ENCODE measurements at regions of chr19 and their contacts with region 1.

Region 1: DNA sequence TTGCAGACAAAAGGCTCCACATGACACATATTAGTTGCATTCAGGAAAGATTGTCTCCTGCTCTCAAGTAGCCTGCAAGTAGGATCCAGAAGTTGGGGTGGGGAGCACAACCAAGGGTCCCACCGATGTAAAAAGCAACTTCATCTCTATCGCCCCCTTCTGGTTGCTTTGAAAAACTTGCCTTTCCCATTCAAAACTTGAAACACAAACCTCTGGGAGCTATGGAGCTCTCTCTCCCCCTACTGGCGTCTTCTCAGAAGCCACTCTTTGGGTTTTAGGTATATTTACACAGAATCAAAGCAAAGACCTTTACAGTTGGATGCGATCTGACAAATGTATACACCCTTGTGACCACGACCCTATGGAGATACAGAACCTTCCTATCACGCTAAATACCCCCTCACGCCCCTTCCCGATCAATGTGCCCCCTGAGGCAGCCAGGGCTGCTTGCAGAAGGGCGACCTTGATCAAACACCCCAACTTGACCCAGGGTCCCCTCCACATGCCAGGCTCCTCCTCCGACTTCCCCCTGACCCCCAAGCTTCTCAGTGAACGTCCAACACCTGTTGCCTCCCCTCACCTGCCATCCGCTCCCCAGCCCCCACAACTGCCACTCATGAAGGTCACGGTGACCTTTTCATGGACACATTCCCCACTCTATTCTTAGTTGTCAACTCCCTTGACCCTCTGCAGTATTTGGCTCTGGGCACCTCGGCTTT is 10.1 kb downstream of the NOSIP start:
- DNase-seq: peak; percentile 87
- CTCF ChIP-seq: peak; percentile 92

Region 2: DNA sequence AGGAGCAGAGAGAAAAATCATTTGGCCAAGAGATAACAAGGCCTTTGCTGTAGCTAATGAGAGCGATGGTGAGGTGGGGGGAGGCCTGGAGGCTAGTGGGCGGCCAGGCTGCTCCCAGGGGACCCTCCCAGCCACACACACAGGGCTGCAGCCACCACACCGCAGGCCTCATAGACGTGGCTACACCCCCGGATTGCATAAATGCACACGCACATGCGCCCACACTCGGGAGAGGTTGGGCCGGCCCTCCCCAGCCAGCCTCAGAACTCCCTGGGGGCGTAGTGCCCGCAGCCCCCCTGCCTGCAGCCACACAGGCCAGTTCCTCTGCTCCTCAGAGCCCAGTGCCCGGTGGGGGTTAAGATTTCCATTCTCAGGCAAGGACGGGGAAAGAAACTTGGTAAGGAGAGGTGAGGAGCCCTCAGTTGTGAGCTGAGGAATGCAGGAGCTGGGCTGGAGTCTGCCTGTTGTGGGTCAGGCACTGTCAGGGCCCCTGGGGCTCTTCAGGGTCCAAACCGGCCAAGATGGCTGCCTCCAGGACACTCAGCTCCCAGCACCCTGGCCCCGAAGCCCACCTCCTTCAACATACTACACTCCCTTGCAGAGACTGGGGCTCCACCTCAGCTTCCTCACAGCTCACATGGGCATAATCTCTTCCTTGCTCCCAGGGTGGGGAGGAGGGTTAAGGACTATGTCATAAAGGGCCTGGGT is 155.0 kb before region 1 on chr19:
- CTCF ChIA-PET with region 1: no interaction called
- POLR2A ChIA-PET with region 1: no interaction called
- DNase-seq: peak; percentile 79
- CTCF ChIP-seq: no peak

Region 3: GRCh38 chr19:49473868-49474544 is 96.3 kb before region 1 on chr19 and contains the start of gene FLT3LG:
- CTCF ChIA-PET with region 1: interaction called, 11 read pairs
- POLR2A ChIA-PET with region 1: no interaction called
- DNase-seq: peak; percentile 92
- CTCF ChIP-seq: peak; percentile 94

Region 4: GRCh38 chr19:49502866-49503581 is 67.3 kb before region 1 on chr19:
- CTCF ChIA-PET with region 1: interaction called, 84 read pairs
- POLR2A ChIA-PET with region 1: no interaction called
- DNase-seq: no peak
- CTCF ChIP-seq: peak; percentile 59

Region 5: DNA sequence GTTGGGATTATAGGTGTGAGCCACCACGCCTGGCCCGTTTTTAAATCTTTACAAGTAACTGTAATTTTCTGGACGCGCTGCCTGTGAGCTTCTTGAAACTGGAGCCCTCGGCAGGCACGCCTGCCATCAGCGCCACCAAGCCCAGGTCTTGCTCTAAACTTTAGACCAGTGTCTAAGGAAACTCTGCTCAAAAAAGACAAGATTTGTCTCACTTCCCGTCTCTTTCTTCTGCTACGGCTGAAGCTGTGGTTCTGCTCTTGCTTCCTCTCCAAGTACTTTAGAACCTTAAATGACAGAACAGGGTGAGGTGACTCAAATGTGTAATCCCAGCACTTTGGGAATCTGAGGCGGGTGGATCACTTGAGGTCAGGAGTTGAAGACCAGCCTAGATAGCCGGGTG is 17.5 kb before region 1 on chr19:
- CTCF ChIA-PET with region 1: interaction called, 98 read pairs
- POLR2A ChIA-PET with region 1: no interaction called
- DNase-seq: no peak
- CTCF ChIP-seq: no peak

Region 6: GRCh38 chr19:49580264-49581006 is 10.1 kb after region 1 on chr19 and contains the start of gene NOSIP:
- CTCF ChIA-PET with region 1: interaction called, 59 read pairs
- POLR2A ChIA-PET with region 1: interaction called, 6 read pairs
- DNase-seq: peak; percentile 91
- CTCF ChIP-seq: no peak

Region 7: GRCh38 chr19:49590071-49590970 is 20.0 kb after region 1 on chr19:
- CTCF ChIA-PET with region 1: interaction called, 12 read pairs
- POLR2A ChIA-PET with region 1: no interaction called
- DNase-seq: peak; percentile 95
- CTCF ChIP-seq: no peak